Common myeloid progenitor, CD34-positive (primary cell): ENCODE measurements at regions of chr15 and their contacts with region 1.

Region 1: DNA sequence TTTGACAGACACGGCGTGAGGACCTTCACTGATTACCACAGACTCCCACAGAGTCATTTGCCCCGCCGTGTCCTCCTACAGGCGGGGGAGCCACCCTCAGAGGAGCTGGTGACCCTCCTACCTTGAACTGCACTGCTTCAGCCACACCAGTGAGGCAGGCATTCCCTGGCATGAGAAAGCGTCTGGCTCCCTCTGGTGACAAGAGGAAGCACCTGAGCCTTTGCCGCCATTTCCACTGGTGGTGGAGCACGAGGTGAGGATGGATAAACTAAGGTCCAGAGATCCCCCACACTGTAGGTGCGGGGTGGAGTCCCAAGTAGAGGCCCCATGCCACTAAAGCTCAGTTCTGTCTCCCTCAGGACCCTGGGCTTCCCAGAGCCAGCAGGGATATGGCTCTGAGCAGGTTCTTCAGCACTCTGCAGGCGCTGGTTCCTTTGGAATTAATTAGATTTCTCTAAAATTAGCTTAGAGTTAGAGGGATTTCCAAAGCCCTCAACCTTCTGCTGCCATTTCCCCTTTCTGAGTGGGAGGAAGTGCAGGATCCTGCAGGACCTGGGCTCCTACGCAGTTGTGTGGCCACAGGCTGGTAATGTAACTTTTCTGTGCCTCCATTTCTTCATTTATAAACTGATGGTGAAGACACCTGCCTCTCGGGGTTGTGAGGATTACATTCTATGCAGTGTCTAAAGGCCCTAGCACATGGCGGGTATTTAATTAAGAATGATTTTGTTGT is 224.0 kb downstream of the SLCO3A1 start:
- DNase-seq: peak; percentile 72 to 81 (median 80)
- H3K4me3 ChIP-seq: no peak overlapping the region
- H3K27ac ChIP-seq: no peak overlapping the region
- H3K4me1 ChIP-seq: peaks cover 6 to 62% (median 48%) of the 10 kb centered on the region in 4 experiments
- H3K27me3 ChIP-seq: no peaks in the 10 kb centered on the region

Region 2: DNA sequence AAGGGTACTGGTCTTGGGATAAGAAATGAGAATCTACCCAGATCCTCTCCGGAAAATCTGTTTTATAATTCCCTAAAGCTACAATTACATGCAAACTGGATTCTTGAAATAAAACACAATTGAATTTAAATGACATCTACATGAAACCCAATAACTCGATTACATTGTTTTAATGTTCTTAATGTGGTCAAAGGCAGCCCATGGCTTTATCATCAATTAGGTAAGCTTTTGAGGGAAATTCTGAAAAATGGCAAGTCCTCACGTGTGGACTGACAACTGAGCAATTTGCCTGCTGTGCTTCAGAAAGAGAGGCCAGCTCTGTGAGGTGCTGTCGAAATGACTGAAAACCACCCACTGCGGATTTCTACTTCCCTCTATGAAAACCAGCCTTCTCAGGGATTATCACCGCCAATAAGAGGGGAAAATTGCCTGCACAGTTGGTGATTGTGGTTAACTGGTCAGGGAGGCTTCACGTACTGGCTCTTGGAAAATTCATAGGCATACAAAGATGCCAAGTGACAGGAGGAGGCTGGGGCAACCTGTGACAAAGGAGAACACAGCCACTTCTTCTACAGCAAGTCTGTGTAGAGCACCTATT is 424.8 kb before region 1 on chr15:
- CTCF ChIA-PET with region 1: no interaction called
- POLR2A ChIA-PET with region 1: no interaction called
- DNase-seq: no peak
- H3K4me3 ChIP-seq: no peak overlapping the region
- H3K27ac ChIP-seq: no peak overlapping the region
- H3K4me1 ChIP-seq: peaks cover 0 to 8% (median 0%) of the 10 kb centered on the region in 4 experiments
- H3K27me3 ChIP-seq: peaks cover 0 to 4% (median 0%) of the 10 kb centered on the region in 5 experiments

Region 3: DNA sequence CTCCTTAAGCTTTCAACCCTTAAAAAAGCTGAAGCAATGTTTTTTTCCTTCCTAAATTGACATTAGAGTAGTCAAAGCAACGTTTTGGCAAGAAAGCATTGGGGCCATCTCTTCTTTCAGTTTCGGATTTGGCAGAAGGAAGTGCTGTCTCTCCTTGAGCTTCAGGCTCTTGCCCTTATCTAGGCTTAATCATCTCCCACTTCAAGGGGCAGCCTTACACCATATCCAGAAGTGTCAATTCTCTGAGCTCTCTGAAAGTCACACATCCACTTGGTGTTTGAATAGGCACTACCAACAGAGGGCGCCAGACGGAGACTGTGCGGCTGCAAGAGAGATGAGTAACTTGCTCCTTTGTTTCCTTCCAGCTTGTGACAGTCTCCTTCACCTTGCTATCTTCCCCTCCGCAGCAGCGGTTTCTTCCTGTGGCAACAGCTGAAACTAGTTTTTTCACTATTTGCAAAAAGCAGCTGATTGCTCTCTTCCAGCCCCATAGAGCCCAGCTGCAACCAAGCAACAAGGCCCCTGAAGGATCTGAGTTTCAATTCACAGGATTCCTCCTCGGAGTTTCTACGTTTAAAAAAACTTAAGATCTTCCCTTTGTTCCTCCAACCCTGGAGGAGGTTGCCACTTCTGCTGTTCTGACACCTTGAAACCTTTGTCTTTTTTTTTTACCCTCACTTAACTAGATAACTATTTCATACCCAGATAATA is 371.0 kb before region 1 on chr15:
- CTCF ChIA-PET with region 1: interaction called, 36 read pairs
- POLR2A ChIA-PET with region 1: no interaction called
- DNase-seq: peak; percentile 90 to 96 (median 95)
- H3K4me3 ChIP-seq: peak overlapping the region in 2 of 7 experiments; percentile 30 to 48
- H3K27ac ChIP-seq: peak overlapping the region in 1 of 2 experiments; percentile 25
- H3K4me1 ChIP-seq: peaks cover 3 to 11% (median 9%) of the 10 kb centered on the region in 4 experiments
- H3K27me3 ChIP-seq: no peaks in the 10 kb centered on the region

Region 4: DNA sequence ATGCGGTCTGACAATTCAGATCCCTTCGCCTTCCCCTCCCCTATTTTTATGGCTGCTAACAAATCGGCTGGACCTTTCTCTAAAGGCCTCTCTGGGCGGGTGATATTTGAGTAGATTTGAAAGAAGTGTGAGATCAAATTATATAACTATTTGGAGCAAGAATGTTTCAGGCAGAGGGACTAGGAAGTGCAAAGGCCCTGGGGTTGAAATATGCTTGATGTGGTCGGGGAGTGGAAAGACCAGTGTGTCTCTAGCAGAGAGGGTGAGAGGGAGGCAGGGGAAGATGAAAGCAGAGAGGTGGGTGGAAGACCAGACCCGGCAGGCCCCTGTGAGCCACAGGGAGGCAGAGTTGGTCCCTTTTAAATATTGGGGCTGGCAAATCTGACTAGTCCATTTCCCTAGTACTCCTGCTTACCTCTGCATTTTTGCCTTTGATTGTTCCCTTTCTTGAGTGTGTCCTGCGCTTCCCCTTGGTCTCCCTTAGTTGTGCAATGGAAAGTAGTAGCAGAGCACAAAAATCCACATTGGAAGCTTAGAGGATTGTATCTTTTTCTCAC is 191.7 kb before region 1 on chr15:
- CTCF ChIA-PET with region 1: interaction called, 62 read pairs
- POLR2A ChIA-PET with region 1: no interaction called
- DNase-seq: peak in 2 of 3 donors; percentile 41 to 51
- H3K4me3 ChIP-seq: no peak overlapping the region
- H3K27ac ChIP-seq: no peak overlapping the region
- H3K4me1 ChIP-seq: peaks cover 0 to 11% (median 7%) of the 10 kb centered on the region in 4 experiments
- H3K27me3 ChIP-seq: no peaks in the 10 kb centered on the region

Region 5: GRCh38 chr15:91947683-91948608 is 129.6 kb before region 1 on chr15:
- CTCF ChIA-PET with region 1: interaction called, 35 read pairs
- POLR2A ChIA-PET with region 1: no interaction called
- DNase-seq: peak in 2 of 3 donors; percentile 39 to 58
- H3K4me3 ChIP-seq: peak overlapping the region in 5 of 7 experiments; percentile 9 to 48 (median 23)
- H3K27ac ChIP-seq: peak overlapping the region; percentile 2 to 28
- H3K4me1 ChIP-seq: peaks cover 5 to 55% (median 35%) of the 10 kb centered on the region in 4 experiments
- H3K27me3 ChIP-seq: no peaks in the 10 kb centered on the region

Region 6: GRCh38 chr15:92091155-92091734 is 13.7 kb after region 1 on chr15:
- CTCF ChIA-PET with region 1: interaction called, 47 read pairs
- POLR2A ChIA-PET with region 1: no interaction called
- DNase-seq: no peak
- H3K4me3 ChIP-seq: no peak overlapping the region
- H3K27ac ChIP-seq: no peak overlapping the region
- H3K4me1 ChIP-seq: peaks cover 20 to 59% (median 50%) of the 10 kb centered on the region in 4 experiments
- H3K27me3 ChIP-seq: no peaks in the 10 kb centered on the region

Region 7: DNA sequence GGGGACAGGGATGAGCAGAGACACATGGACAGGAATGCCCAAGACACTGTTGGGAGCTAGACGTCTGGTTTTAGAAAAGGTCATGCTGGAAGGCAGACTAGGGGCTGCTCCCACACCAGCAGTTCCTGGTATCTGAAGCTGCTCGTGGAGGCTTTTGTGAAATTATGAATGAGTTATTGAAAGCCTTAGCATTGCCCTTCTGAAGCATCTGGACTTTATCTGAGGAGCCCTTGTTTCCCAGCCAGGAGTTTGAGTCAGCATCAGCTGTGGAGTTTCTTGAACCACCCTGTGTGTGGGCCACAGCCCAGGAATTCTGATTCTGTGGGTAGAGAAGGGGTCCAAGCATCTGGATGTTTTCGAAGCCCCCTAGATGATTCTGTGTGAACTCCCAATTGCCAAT is 34.7 kb after region 1 on chr15:
- CTCF ChIA-PET with region 1: no interaction called
- POLR2A ChIA-PET with region 1: no interaction called
- DNase-seq: no peak
- H3K4me3 ChIP-seq: no peak overlapping the region
- H3K27ac ChIP-seq: no peak overlapping the region
- H3K4me1 ChIP-seq: peaks cover 0 to 4% (median 1%) of the 10 kb centered on the region in 4 experiments
- H3K27me3 ChIP-seq: no peaks in the 10 kb centered on the region

Region 8: GRCh38 chr15:92142242-92143232 is 65.0 kb after region 1 on chr15:
- CTCF ChIA-PET with region 1: no interaction called
- POLR2A ChIA-PET with region 1: no interaction called
- DNase-seq: no peak
- H3K4me3 ChIP-seq: no peak overlapping the region
- H3K27ac ChIP-seq: no peak overlapping the region
- H3K4me1 ChIP-seq: no peaks in the 10 kb centered on the region
- H3K27me3 ChIP-seq: no peaks in the 10 kb centered on the region